WTC11 (cell line): ENCODE measurements at regions of chr9 and their contacts with region 1.

Region 1: DNA sequence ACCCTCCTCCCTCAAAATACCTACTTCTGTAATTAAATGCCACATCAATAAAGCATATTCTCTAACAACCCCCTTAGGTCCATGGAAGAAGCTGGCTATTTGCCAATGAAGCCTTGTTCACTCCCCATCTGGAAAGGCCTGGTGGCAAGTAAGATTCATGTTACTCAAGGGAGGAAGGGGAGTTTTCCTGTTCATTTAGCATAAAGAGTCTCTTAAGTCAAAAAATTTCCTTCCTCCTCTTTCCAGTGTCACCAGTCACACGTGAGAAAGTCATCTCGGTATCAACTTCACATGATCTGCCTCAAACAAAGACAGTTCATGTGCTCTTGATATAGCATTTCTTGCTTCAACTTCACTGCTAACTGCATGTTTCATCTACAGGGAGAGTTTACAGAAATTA is 32.7 kb upstream of the RIC1 start:
- DNase-seq: no peak
- ATAC-seq: no peak
- H3K4me3 Mint-ChIP-seq: no peak overlapping the region
- H3K27ac Mint-ChIP-seq: no peak overlapping the region
- H3K4me1 Mint-ChIP-seq: no peaks in the 10 kb centered on the region
- H3K27me3 Mint-ChIP-seq: peaks cover 9% of the 10 kb centered on the region
- CTCF ChIP-seq: no peak

Region 2: DNA sequence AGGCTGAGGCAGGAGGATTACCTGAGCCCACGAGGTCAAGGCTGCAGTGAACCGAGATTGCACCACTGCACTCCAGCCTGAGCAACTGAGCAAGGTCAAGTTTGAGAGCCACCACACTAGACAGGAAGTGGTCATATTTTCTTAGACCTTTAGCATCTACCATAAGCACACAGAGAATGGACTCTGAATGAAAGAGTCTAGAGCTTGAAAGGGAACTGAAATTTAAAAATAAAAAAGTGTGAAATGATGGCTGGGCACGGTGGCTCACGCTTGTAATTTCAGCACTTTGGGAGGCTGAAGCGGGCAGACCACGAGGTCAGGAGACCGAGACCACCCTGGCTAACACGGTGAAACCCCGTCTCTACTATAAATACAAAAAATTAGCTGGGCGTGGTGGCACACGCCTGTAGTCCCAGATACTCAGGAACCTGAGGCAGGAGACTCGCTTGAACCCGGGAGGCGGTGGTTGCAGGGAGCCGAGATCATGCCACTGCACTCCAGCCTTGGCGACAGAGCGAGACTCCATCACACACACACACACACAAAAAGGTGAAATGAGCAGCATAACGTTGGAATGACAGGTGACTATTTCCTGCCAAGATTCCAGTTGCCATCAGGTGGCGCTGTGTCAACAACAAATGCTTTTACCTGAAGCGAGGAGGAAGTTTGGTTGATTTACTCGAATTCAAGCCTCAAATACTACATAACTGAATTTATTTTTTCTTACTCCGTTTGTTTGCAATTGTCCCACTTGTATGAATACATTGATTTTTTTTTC is 833.9 kb before region 1 on chr9:
- CTCF ChIA-PET with region 1: interaction called, 17 read pairs
- POLR2A ChIA-PET with region 1: no interaction called
- DNase-seq: peak; percentile 84
- ATAC-seq: peak; percentile 29
- H3K4me3 Mint-ChIP-seq: peak overlapping the region; percentile 56
- H3K27ac Mint-ChIP-seq: peak overlapping the region; percentile 46; the same call in 1 of the 2 replicates
- H3K4me1 Mint-ChIP-seq: peaks cover 15% of the 10 kb centered on the region
- H3K27me3 Mint-ChIP-seq: no peaks in the 10 kb centered on the region
- CTCF ChIP-seq: peak; percentile 70

Region 3: GRCh38 chr9:5085993-5086392 is 510.2 kb before region 1 on chr9:
- CTCF ChIA-PET with region 1: no interaction called
- POLR2A ChIA-PET with region 1: no interaction called
- DNase-seq: peak; percentile 13
- ATAC-seq: peak; percentile 38
- H3K4me3 Mint-ChIP-seq: no peak overlapping the region
- H3K27ac Mint-ChIP-seq: no peak overlapping the region
- H3K4me1 Mint-ChIP-seq: 0 out of 2 replicates have a peak, but pooled peaks cover 3% of the 10 kb centered on the region
- H3K27me3 Mint-ChIP-seq: no peaks in the 10 kb centered on the region
- CTCF ChIP-seq: no peak

Region 4: GRCh38 chr9:5437254-5438216 is 158.6 kb before region 1 on chr9 and contains the start of gene PLGRKT:
- CTCF ChIA-PET with region 1: interaction called, 21 read pairs
- POLR2A ChIA-PET with region 1: no interaction called
- DNase-seq: peak; percentile 91
- ATAC-seq: peak; percentile 97
- H3K4me3 Mint-ChIP-seq: peak within 1 kb of the TSS; percentile 95
- H3K27ac Mint-ChIP-seq: peak within 1 kb of the TSS; percentile 97
- H3K4me1 Mint-ChIP-seq: peaks cover 24% of the 10 kb centered on the region
- H3K27me3 Mint-ChIP-seq: no peaks in the 10 kb centered on the region
- CTCF ChIP-seq: no peak
- total RNA-seq, gene PLGRKT: 19.2 to 26.3 TPM (median 25.0 TPM) in 3 replicates

Region 5: DNA sequence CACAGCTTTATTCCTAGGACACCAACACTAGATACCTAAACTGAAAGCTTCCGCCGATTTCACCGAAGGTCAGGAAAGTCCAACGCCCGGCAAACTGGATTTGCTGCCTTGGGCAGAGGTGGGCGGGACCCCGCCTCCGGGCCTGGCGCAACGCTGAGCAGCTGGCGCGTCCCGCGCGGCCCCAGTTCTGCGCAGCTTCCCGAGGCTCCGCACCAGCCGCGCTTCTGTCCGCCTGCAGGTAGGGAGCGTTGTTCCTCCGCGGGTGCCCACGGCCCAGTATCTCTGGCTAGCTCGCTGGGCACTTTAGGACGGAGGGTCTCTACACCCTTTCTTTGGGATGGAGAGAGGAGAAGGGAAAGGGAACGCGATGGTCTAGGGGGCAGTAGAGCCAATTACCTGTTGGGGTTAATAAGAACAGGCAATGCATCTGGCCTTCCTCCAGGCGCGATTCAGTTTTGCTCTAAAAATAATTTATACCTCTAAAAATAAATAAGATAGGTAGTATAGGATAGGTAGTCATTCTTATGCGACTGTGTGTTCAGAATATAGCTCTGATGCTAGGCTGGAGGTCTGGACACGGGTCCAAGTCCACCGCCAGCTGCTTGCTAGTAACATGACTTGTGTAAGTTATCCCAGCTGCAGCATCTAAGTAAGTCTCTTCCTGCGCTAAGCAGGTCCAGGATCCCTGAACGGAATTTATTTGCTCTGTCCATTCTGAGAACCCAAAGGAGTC is 145.6 kb before region 1 on chr9 and contains the start of gene CD274:
- CTCF ChIA-PET with region 1: interaction called, 36 read pairs
- POLR2A ChIA-PET with region 1: no interaction called
- DNase-seq: peak; percentile 90
- ATAC-seq: peak; percentile 100
- H3K4me3 Mint-ChIP-seq: peak within 1 kb of the TSS; percentile 71
- H3K27ac Mint-ChIP-seq: no peak within 1 kb of the TSS
- H3K4me1 Mint-ChIP-seq: peaks cover 3% of the 10 kb centered on the region; the same call in 1 of the 2 replicates
- H3K27me3 Mint-ChIP-seq: 0 out of 2 replicates have a peak, but pooled peaks cover 3% of the 10 kb centered on the region
- CTCF ChIP-seq: no peak
- total RNA-seq, gene CD274: 0.05 to 0.42 TPM (median 0.21 TPM) in 3 replicates

Region 6: DNA sequence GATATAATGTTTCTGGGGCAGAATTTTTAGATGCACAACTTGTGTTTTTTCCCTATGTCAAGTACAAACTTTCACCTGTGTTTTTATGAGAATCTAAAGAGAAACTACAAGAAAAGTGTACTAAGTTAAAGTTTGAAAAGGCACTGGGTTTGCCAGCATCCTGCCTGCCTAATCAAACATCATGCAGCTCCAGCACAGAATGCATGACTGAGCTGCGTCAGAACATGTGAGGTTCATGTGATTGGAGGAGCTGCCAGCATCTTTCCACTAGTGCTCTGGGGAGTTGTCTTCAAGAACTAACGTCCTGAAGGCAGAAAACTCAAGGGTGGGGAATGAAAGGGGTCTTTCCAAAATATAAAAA is 13.4 kb before region 1 on chr9:
- CTCF ChIA-PET with region 1: interaction called, 18 read pairs
- POLR2A ChIA-PET with region 1: no interaction called
- DNase-seq: no peak
- ATAC-seq: no peak
- H3K4me3 Mint-ChIP-seq: no peak overlapping the region
- H3K27ac Mint-ChIP-seq: no peak overlapping the region
- H3K4me1 Mint-ChIP-seq: peaks cover 5% of the 10 kb centered on the region; the same call in 1 of the 2 replicates
- H3K27me3 Mint-ChIP-seq: peaks cover 5% of the 10 kb centered on the region; the same call in 1 of the 2 replicates
- CTCF ChIP-seq: no peak

Region 7: DNA sequence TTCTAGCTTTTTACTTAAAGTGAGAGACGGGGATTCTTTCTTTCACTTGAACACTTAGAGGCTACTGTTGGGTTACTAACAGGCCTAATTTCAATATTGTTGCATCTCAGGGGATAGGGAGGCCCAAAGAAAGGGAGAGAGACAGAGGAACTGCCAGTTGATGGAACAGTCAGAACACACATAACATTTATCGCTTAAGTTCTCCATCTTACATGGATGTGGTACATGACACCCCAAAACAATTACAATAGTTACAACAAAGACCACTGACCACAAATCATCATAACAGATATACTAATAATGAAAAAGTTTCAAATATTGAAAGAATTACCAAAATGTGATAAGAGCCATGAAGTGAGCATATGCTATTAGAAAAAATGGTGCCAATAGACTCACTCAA is 28.5 kb after region 1 on chr9:
- CTCF ChIA-PET with region 1: interaction called, 10 read pairs
- POLR2A ChIA-PET with region 1: no interaction called
- DNase-seq: no peak
- ATAC-seq: no peak
- H3K4me3 Mint-ChIP-seq: no peak overlapping the region
- H3K27ac Mint-ChIP-seq: no peak overlapping the region
- H3K4me1 Mint-ChIP-seq: peaks cover 15% of the 10 kb centered on the region
- H3K27me3 Mint-ChIP-seq: no peaks in the 10 kb centered on the region
- CTCF ChIP-seq: no peak